GM12878 (cell line): ENCODE measurements at regions of chr12 and their contacts with region 1.

Region 1: GRCh38 chr12:109393437-109394345 is 46.0 kb downstream of the MYO1H start:
- DNase-seq: no peak
- ATAC-seq: peak; percentile 78
- H3K4me3 ChIP-seq: no peak overlapping the region
- H3K27ac ChIP-seq: no peak overlapping the region
- H3K4me1 ChIP-seq: no peaks in the 10 kb centered on the region
- H3K27me3 ChIP-seq: no peaks in the 10 kb centered on the region
- CTCF ChIP-seq: peak; percentile 87 to 91 (median 87)
- EP300 ChIP-seq: no peak
- POLR2A ChIP-seq: no peak
- RAD21 ChIP-seq: peak; percentile 66

Region 2: GRCh38 chr12:109264095-109264942 is 129.4 kb before region 1 on chr12:
- CTCF ChIA-PET with region 1: interaction called, 44 read pairs
- POLR2A ChIA-PET with region 1: no interaction called
- RAD21 ChIA-PET with region 1: interaction called, 14 read pairs
- SMC1A ChIA-PET with region 1: interaction called, 8 read pairs
- in situ Hi-C with region 1: loop called (anchors 5 kb)
- intact Hi-C with region 1: no loop called
- DNase-seq: no peak
- ATAC-seq: peak; percentile 99
- H3K4me3 ChIP-seq: no peak overlapping the region
- H3K27ac ChIP-seq: no peak overlapping the region
- H3K4me1 ChIP-seq: no peaks in the 10 kb centered on the region
- H3K27me3 ChIP-seq: no peaks in the 10 kb centered on the region; a peak in 1 of 4 replicates
- CTCF ChIP-seq: peak; percentile 80 to 94 (median 86)
- EP300 ChIP-seq: no peak
- POLR2A ChIP-seq: no peak
- RAD21 ChIP-seq: peak; percentile 75

Region 3: DNA sequence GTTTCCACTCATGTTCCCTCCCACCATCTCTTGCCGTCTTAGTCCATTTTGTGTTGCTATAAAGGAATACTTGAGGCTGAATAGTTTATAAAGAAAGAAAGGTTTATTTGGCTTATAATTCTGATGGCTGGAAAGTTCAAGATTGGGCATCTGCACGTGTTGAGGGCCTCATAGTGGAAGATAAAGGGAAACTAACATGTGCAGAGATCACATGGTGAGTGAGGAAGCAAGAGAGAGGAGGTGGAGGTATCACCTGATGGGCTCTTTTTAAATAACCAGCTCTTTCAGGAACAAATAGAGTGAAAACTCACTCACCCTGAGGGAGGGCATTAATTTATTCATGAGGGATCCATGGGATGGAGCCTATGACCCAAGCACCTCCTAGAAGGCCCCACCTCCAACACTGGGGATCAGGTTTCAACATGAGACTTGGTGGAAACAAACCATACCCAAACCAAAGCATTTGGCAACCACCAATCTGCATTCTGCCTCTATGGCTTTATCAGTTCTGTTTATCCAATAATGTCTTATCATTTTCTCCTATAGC is 16.5 kb before region 1 on chr12:
- CTCF ChIA-PET with region 1: interaction called, 11 read pairs
- POLR2A ChIA-PET with region 1: no interaction called
- RAD21 ChIA-PET with region 1: no interaction called
- SMC1A ChIA-PET with region 1: interaction called, 3 read pairs
- in situ Hi-C with region 1: no loop called
- intact Hi-C with region 1: no loop called
- DNase-seq: no peak
- ATAC-seq: no peak
- H3K4me3 ChIP-seq: no peak overlapping the region
- H3K27ac ChIP-seq: no peak overlapping the region
- H3K4me1 ChIP-seq: no peaks in the 10 kb centered on the region
- H3K27me3 ChIP-seq: no peaks in the 10 kb centered on the region; a peak in 2 of 4 replicates
- CTCF ChIP-seq: no peak
- EP300 ChIP-seq: no peak
- POLR2A ChIP-seq: no peak
- RAD21 ChIP-seq: no peak

Region 4: GRCh38 chr12:109440851-109441493 is 47.3 kb after region 1 on chr12:
- CTCF ChIA-PET with region 1: no interaction called
- POLR2A ChIA-PET with region 1: no interaction called
- RAD21 ChIA-PET with region 1: no interaction called
- SMC1A ChIA-PET with region 1: no interaction called
- in situ Hi-C with region 1: no loop called
- intact Hi-C with region 1: no loop called
- DNase-seq: no peak
- ATAC-seq: no peak
- H3K4me3 ChIP-seq: no peak overlapping the region
- H3K27ac ChIP-seq: no peak overlapping the region
- H3K4me1 ChIP-seq: no peaks in the 10 kb centered on the region
- H3K27me3 ChIP-seq: no peaks in the 10 kb centered on the region
- CTCF ChIP-seq: no peak
- EP300 ChIP-seq: no peak
- POLR2A ChIP-seq: no peak
- RAD21 ChIP-seq: no peak

Region 5: DNA sequence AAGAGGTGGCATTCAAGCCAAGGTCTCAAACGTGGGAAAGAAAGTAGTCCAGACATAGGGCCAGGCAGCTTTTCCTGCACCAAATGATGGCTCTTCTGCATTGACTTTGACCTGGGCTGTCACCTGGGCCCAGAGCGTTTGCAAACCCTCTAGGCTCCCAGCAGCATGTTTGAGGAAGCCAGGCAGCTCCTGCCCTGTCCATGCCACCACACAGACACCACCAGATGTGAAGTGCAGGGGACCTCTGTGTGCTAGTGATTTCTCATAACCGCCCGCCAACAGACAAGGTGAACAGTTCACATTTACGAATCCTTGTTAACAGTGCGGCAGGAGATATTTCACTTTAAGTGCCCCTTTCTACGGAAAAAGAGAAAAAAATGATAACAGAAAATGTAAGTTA is 270.1 kb after region 1 on chr12:
- CTCF ChIA-PET with region 1: no interaction called
- POLR2A ChIA-PET with region 1: no interaction called
- RAD21 ChIA-PET with region 1: no interaction called
- SMC1A ChIA-PET with region 1: no interaction called
- in situ Hi-C with region 1: no loop called
- intact Hi-C with region 1: no loop called
- DNase-seq: no peak
- ATAC-seq: no peak
- H3K4me3 ChIP-seq: no peak overlapping the region
- H3K27ac ChIP-seq: no peak overlapping the region
- H3K4me1 ChIP-seq: no peaks in the 10 kb centered on the region
- H3K27me3 ChIP-seq: no peaks in the 10 kb centered on the region; a peak in 1 of 4 replicates
- CTCF ChIP-seq: no peak
- EP300 ChIP-seq: no peak
- POLR2A ChIP-seq: no peak
- RAD21 ChIP-seq: no peak